ENCODE measurements at regions of chr20 and their contacts with region 1.

Region 1: GRCh38 chr20:44217342-44218092 is 6.9 kb upstream of the OSER1 start:
- DNase-seq: peak; percentile 44
- CTCF ChIP-seq: peak; percentile 91

Region 2: GRCh38 chr20:44228465-44229258 is 11.1 kb after region 1 on chr20:
- CTCF ChIA-PET with region 1: interaction called, 19 read pairs
- POLR2A ChIA-PET with region 1: no interaction called
- DNase-seq: no peak
- CTCF ChIP-seq: no peak

Region 3: DNA sequence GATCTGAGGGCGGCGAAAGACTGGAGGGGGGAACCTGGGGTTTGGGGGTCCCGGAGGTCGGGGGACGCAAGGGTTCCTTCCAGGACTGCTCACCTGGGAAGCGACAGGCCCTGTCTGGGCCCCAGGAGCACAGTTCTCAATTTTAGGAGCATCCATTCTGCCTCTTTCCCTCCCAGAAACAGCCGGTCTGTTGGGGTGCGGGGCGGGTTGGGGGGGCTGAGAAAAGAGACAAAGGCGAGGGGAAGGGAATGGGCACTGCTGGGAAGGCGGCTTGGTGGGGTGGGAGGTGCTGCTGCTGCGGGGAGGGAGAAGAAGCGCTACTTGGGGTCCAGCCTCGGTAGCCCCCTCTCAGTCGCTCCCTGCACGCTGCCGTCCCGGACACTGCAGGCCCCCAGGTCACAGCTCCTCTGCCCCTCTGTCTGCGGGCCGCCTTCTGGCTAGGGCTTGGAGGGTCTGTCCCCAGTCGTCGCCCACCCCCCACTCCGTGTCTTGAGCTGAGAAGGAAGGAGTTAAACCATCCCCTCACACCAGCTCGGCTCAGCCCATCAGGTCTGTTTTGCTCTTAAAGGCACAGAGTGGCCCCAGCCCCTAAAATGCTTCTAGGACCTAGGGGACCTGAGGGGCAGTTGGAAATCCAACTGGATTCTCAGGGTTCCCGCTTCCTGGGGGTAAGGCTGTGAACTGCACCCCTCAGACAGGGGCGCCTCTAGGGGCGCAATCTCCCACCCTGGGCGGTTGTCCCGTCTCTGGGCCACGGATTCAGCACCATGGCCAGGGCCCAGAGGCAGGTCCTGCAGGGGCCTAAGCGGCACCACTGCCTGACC is 30.3 kb after region 1 on chr20:
- CTCF ChIA-PET with region 1: interaction called, 16 read pairs
- POLR2A ChIA-PET with region 1: no interaction called
- DNase-seq: peak; percentile 50
- CTCF ChIP-seq: no peak

Region 4: GRCh38 chr20:44310664-44311639 is 93.4 kb after region 1 on chr20 and contains the start of gene FITM2:
- CTCF ChIA-PET with region 1: interaction called, 371 read pairs
- POLR2A ChIA-PET with region 1: no interaction called
- DNase-seq: peak; percentile 100
- CTCF ChIP-seq: peak; percentile 98

Region 5: DNA sequence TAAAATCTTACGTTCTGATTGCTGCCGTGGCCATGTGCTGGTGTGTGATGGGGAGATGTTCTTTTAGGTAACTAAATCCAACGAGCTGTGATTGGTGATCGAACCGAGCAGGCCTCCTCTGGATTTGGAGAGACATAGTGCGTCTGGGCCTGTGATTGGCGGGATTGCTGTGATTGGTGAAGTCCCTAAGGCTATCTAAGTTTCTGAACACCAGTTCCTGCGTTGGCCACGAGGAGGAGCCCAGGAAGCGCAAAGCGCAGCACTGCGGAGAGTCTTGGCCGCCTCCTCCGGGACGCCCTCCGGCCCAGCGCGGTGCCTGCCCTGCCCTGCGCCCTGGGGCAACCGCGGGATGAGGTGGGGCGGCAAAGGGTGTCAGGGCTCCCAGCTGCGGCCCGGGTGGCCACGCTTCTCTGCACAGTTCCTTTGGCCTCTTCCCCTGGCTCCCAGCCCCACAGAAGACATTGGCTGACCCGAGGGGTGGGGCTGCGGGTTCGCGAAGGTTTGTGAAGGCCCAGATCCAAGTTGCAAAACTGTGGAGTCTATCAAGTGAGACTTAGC is 171.0 kb after region 1 on chr20:
- CTCF ChIA-PET with region 1: interaction called, 113 read pairs
- POLR2A ChIA-PET with region 1: no interaction called
- DNase-seq: peak; percentile 85
- CTCF ChIP-seq: peak; percentile 91

Region 6: GRCh38 chr20:44609511-44610312 is 392.2 kb after region 1 on chr20:
- CTCF ChIA-PET with region 1: interaction called, 26 read pairs
- POLR2A ChIA-PET with region 1: no interaction called
- DNase-seq: peak; percentile 82
- CTCF ChIP-seq: peak; percentile 95